Heart right ventricle (tissue), 16 donors: ENCODE measurements at regions of chr19 and their contacts with region 1.

Region 1: DNA sequence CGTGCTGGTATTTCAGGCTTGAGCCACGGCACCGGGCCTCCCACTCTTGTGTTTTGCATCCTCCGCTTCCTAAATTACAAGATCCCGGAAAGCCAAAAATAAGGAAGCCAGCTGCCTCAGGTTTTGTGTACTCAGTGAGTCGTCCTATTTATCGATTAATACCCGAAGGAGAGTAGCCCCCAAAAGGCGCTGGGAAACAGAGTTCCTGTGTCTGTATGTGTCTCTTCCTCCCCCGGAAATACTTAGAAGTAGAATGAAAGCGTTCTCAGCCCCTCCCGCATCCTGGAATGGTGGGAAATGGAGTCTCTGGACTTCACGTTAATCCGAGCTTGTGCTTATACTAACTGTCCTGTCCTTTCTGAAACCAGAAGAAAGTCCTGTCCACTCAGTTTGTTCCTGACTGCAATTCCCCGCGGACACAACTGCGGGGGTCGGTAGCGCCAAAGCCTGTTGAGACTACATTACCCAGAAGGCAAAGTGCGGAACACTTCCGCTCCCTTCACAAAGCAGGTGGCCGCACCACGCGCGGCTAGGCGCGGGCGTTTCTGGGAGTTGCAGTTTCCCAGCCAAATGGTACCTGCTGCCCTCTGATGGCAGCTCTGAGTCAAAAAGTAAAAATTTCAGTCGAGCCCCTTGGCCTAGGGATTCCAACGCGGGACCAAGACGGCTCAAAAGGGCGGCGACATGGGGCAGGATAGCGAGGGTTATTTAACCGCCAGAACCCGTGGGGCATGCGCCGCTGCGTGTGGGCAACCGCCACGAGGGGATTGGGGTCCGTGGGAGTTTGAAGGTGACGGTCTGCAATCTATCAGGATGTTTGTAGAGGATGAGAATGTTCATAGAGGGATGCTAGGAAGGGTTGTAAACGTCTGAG is 2.2 kb upstream of the GSK3A start:
- DNase-seq: peak; percentile 90 to 93
- ATAC-seq: peak; percentile 25 to 64 (median 46)
- H3K4me3 ChIP-seq: peak overlapping the region; percentile 46 to 95 (median 86)
- H3K27ac ChIP-seq: peak overlapping the region; percentile 72 to 100 (median 90)
- H3K4me1 ChIP-seq: peaks cover 17 to 81% (median 65%) of the 10 kb centered on the region in 9 donors
- H3K27me3 ChIP-seq: no peaks in the 10 kb centered on the region
- CTCF ChIP-seq: peak; percentile 45 to 88 (median 67)

Region 2: DNA sequence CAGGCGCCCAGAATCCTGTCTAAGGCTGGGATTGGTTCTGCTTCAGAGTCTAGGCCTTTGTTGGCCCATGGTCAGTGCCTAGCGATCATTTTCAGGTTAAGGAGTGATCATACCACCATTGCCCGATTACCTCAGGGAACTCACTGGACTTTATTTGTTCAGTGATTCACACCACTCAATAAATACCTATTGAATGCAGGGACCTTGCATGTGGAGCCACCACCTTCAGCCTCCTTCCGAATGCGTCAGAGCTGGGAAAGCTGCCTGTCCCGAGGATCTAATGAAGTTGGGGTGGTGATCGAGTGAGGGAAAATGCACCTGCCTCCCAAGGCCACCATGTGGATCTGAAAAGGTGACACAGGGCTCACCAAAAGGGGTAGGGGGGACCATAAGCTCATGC is 72.3 kb before region 1 on chr19:
- intact Hi-C with region 1: no loop called
- DNase-seq: no peak
- ATAC-seq: no peak
- H3K4me3 ChIP-seq: no peak overlapping the region
- H3K27ac ChIP-seq: no peak overlapping the region
- H3K4me1 ChIP-seq: peaks cover 0 to 14% (median 11%) of the 10 kb centered on the region in 9 donors
- H3K27me3 ChIP-seq: peaks cover 0 to 47% (median 39%) of the 10 kb centered on the region in 7 donors
- CTCF ChIP-seq: no peak

Region 3: GRCh38 chr19:42219812-42220750 is 24.5 kb before region 1 on chr19 and contains the start of gene ZNF526:
- intact Hi-C with region 1: loop called in 1 of 10 experiments (anchors 1 kb)
- DNase-seq: peak; percentile 97
- ATAC-seq: peak; percentile 90 to 95 (median 94)
- H3K4me3 ChIP-seq: peak within 1 kb of the TSS; percentile 65 to 96 (median 85)
- H3K27ac ChIP-seq: peak within 1 kb of the TSS in 9 of 10 donors; percentile 68 to 98 (median 81)
- H3K4me1 ChIP-seq: peaks cover 4 to 57% (median 40%) of the 10 kb centered on the region in 9 donors
- H3K27me3 ChIP-seq: no peaks in the 10 kb centered on the region
- CTCF ChIP-seq: no peak
- total RNA-seq, gene ZNF526: 3.2 to 7.0 (median 5.4) TPM

Region 4: DNA sequence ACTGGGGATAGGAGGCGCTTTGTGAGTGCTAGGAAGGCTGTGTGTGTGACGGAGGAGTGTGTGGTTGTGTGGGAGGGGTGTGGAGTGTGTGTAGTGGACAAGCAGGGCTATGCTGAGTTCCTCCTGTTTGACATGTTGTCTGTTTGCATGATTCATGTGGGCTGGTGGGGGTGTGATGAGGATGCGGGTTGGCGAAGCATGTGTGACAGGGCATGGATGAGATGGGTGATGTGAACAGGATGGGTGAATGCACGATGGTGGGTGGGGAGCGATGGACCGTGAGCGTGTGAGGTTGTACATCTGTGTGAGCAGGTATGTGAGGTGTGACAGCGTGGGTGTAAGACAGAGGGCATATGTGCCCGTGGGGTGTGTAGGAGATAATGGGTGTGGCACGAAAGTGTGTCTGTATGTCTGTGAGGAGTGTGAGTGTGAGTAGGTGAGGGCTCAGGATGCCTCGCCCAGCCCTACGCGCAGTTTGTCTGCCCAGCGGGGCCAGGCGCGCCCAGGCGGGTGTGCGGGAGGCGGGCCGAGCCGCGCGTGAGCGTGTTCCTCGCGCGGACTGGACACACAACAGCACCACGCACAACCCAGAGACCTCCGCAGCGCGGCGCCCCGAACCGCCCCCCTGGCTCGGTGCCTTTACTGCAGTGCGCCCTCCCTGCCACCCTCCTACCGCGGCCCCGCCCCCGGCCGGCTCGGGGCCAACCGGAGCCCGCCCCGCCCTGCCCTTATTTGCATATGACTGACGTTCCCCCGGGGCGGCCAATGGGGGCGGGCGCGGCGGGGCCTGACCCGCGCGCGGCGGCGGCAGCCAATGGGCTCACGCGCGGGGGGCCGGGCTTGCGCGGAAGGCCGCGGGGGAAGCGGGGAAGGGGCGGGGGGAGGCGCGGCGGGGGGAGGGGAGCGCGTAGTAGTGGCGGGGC is 38.8 kb after region 1 on chr19:
- intact Hi-C with region 1: loop called in 8 of 10 experiments (anchors 2 to 5 kb)
- DNase-seq: peak; percentile 96 to 98
- ATAC-seq: peak; percentile 58 to 74 (median 68)
- H3K4me3 ChIP-seq: peak overlapping the region in 9 of 10 donors; percentile 34 to 88 (median 60)
- H3K27ac ChIP-seq: peak overlapping the region; percentile 91 to 99 (median 98)
- H3K4me1 ChIP-seq: peaks cover 34 to 74% (median 67%) of the 10 kb centered on the region in 9 donors
- H3K27me3 ChIP-seq: no peaks in the 10 kb centered on the region
- CTCF ChIP-seq: peak in 1 of 9 donors; percentile 17

Region 5: GRCh38 chr19:42290523-42291438 is 46.2 kb after region 1 on chr19:
- intact Hi-C with region 1: loop called in 5 of 10 experiments (anchors 5 kb)
- DNase-seq: no peak
- ATAC-seq: peak in 1 of 8 donors; percentile 4
- H3K4me3 ChIP-seq: no peak overlapping the region
- H3K27ac ChIP-seq: no peak overlapping the region
- H3K4me1 ChIP-seq: peaks cover 9 to 14% (median 13%) of the 10 kb centered on the region in 9 donors
- H3K27me3 ChIP-seq: no peaks in the 10 kb centered on the region
- CTCF ChIP-seq: peak; percentile 10 to 54 (median 36)

Region 6: DNA sequence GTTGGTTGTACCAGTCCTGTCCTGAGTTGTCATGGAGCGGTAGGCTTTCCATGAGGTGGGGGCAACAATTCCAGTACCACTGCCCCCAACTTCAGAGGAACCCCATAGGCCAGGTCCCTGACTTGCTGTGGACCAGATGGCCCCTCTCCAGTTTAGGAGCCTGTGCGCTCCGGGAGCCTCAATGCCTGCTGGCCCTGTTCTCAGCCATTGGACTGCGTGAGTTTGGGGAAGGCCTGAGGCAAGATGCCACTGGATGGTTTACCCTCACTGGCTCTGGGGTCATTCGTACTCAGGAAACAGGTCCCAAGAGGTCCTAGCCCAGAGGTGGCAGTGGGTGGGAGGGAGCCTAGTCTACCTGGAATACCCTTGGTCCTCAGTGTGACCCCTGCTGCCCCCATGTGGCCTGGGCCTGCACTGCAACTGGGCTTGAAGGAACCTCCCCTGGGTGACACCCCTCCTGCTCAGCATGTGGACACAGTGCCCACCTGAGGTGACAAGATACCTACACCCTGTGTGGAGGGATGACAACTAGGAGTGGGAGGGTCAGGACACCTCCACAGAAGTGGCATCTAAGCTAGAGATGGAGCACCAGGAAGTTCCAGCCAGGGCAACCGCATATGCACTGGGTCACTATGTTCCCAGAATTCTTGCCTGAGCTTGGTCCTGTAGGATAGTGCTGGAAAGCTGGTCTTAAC is 51.4 kb after region 1 on chr19:
- intact Hi-C with region 1: loop called in 7 of 10 experiments (anchors 1 to 5 kb)
- DNase-seq: peak; percentile 86 to 89
- ATAC-seq: peak; percentile 59 to 86 (median 80)
- H3K4me3 ChIP-seq: no peak overlapping the region
- H3K27ac ChIP-seq: peak overlapping the region in 1 of 10 donors; percentile 10
- H3K4me1 ChIP-seq: no peaks in the 10 kb centered on the region
- H3K27me3 ChIP-seq: no peaks in the 10 kb centered on the region
- CTCF ChIP-seq: peak; percentile 81 to 97 (median 96)

Region 7: DNA sequence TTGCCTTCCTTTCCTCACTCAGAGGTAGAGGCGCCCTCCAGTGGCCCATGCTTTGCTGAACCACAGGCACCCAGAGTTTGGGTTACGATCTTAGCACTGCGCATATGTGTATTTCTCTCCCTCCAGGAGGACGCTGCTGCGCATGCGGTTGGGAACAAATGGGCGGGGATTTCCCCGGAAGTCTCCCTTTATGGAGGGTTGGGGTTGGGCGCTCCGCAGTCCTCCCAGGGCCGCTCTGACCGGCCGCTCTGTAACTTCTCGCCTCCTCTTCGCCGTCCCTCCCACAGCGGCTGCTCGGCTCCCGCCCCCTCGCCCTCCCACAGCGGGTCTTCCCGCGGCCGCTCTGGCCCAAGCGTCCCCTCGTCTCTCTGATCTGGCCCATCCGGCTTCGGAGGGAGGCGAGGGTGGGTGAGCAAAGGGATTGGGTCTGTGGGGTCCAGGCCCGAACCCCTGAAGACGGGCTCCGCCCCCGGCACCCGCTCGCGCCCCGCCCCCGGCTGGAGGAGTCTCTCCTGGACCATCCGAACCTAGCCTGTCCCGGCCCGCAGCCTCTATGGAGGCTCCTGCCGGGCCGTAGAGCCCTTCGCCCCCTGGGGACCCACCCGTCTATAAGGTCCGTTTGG is 80.8 kb after region 1 on chr19 and contains the start of gene MEGF8:
- intact Hi-C with region 1: loop called in 2 of 10 experiments (anchors 1 kb)
- DNase-seq: peak; percentile 98
- ATAC-seq: peak; percentile 98 to 99 (median 98)
- H3K4me3 ChIP-seq: peak within 1 kb of the TSS; percentile 72 to 96 (median 84)
- H3K27ac ChIP-seq: peak within 1 kb of the TSS; percentile 51 to 90 (median 84)
- H3K4me1 ChIP-seq: peaks cover 9 to 36% (median 29%) of the 10 kb centered on the region in 9 donors
- H3K27me3 ChIP-seq: peaks cover 12 to 35% (median 26%) of the 10 kb centered on the region in 7 donors
- CTCF ChIP-seq: peak; percentile 69 to 96 (median 86)
- total RNA-seq, gene MEGF8: 33.4 to 44.6 (median 40.4) TPM

Region 8: GRCh38 chr19:42433503-42434260 is 189.1 kb after region 1 on chr19:
- intact Hi-C with region 1: loop called in 1 of 10 experiments (anchors 10 kb)
- DNase-seq: peak; percentile 86 to 92
- ATAC-seq: peak; percentile 89 to 95 (median 92)
- H3K4me3 ChIP-seq: peak overlapping the region in 1 of 10 donors; percentile 11
- H3K27ac ChIP-seq: peak overlapping the region; percentile 46 to 89 (median 62)
- H3K4me1 ChIP-seq: peaks cover 6 to 50% (median 20%) of the 10 kb centered on the region in 9 donors
- H3K27me3 ChIP-seq: no peaks in the 10 kb centered on the region
- CTCF ChIP-seq: peak; percentile 49 to 84 (median 77)